ENCODE measurements at regions of chr17 and their contacts with region 1.

Region 1: GRCh38 chr17:75557075-75557882 is 30.3 kb upstream of the MYO15B start:
- DNase-seq: peak; percentile 73 to 82
- H3K4me3 ChIP-seq: no peak overlapping the region
- H3K4me3 Mint-ChIP-seq: no peak overlapping the region
- H3K27ac Mint-ChIP-seq: no peak overlapping the region
- H3K4me1 ChIP-seq: peaks cover 38% of the 10 kb centered on the region
- H3K4me1 Mint-ChIP-seq: peaks cover 14% of the 10 kb centered on the region
- H3K27me3 ChIP-seq: no peaks in the 10 kb centered on the region
- H3K27me3 Mint-ChIP-seq: no peaks in the 10 kb centered on the region
- CTCF ChIP-seq: no peak

Region 2: DNA sequence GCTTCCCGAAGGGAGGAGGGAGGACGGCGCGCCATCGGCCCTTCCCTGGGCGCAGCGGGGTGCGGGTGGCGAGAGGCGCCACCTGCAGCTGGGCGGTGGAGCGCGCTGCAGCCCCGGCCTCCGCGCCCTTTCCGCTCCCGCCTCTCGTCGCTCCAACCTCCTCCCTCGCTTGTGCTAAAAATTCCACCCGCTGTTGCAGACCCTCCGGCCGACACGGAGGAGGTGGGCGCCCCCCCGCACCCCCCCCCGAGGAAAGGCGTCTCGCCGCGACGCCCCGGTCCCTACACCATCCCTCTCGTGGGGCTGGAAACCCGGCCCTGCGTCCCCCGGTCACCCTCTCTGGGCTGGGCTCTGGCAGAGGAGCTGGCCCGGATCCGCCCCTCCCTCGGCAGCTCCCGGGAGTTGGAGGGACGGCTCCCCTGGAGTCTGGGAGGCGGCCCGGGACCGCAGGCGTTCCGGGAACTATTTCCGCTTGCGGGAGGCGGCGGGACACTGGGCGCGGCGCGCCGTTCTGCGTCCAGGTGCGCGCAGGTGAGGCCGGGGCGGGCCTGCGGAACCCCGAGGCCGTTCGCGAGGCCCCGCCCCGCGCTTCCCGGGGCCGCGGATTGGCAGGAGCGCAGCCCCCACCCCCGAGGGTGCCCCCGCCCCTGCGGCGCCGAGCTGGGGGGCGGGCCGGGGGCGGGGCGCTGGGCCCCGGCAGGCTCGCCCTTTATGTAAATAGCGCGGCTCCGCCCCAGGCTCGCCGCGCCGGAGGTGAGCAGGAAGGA is 32.1 kb before region 1 on chr17 and contains the start of gene LLGL2:
- CTCF ChIA-PET with region 1: interaction called, 14 read pairs
- POLR2A ChIA-PET with region 1: interaction called, 8 read pairs
- intact Hi-C with region 1: loop called (anchors 2 kb)
- DNase-seq: peak; percentile 95 to 98
- H3K4me3 ChIP-seq: peak within 1 kb of the TSS; percentile 68
- H3K4me3 Mint-ChIP-seq: peak within 1 kb of the TSS; percentile 92
- H3K27ac Mint-ChIP-seq: peak within 1 kb of the TSS; percentile 76
- H3K4me1 ChIP-seq: peaks cover 5% of the 10 kb centered on the region; the same call in 1 of the 2 replicates
- H3K4me1 Mint-ChIP-seq: peaks cover 16% of the 10 kb centered on the region
- H3K27me3 ChIP-seq: no peaks in the 10 kb centered on the region
- H3K27me3 Mint-ChIP-seq: no peaks in the 10 kb centered on the region
- CTCF ChIP-seq: peak; percentile 47 to 54
- total RNA-seq, gene LLGL2: 165 and 179 TPM in 2 replicates